ENCODE measurements at regions of chr2 and their contacts with region 1.

Region 1: GRCh38 chr2:31333527-31334183 is 80.9 kb downstream of the XDH start:
- DNase-seq: peak; percentile 74 to 80
- ATAC-seq: peak; percentile 85 to 92
- H3K4me3 ChIP-seq: no peak overlapping the region
- H3K27ac ChIP-seq: peak overlapping the region in 1 of 2 experiments; percentile 5; a peak in 1 of 6 replicates
- H3K4me1 ChIP-seq: no peaks in the 10 kb centered on the region
- CTCF ChIP-seq: peak; percentile 97
- EP300 ChIP-seq: no peak
- POLR2A ChIP-seq: no peak
- RAD21 ChIP-seq: peak; percentile 97 to 98

Region 2: GRCh38 chr2:31170071-31170698 is 163.5 kb before region 1 on chr2:
- CTCF ChIA-PET with region 1: interaction called, 40 read pairs
- POLR2A ChIA-PET with region 1: no interaction called
- DNase-seq: peak; percentile 78 to 84
- ATAC-seq: peak; percentile 92 to 98
- H3K4me3 ChIP-seq: no peak overlapping the region
- H3K27ac ChIP-seq: no peak overlapping the region
- H3K4me1 ChIP-seq: no peaks in the 10 kb centered on the region
- CTCF ChIP-seq: peak; percentile 97
- EP300 ChIP-seq: no peak
- POLR2A ChIP-seq: no peak
- RAD21 ChIP-seq: peak; percentile 96 to 98

Region 3: DNA sequence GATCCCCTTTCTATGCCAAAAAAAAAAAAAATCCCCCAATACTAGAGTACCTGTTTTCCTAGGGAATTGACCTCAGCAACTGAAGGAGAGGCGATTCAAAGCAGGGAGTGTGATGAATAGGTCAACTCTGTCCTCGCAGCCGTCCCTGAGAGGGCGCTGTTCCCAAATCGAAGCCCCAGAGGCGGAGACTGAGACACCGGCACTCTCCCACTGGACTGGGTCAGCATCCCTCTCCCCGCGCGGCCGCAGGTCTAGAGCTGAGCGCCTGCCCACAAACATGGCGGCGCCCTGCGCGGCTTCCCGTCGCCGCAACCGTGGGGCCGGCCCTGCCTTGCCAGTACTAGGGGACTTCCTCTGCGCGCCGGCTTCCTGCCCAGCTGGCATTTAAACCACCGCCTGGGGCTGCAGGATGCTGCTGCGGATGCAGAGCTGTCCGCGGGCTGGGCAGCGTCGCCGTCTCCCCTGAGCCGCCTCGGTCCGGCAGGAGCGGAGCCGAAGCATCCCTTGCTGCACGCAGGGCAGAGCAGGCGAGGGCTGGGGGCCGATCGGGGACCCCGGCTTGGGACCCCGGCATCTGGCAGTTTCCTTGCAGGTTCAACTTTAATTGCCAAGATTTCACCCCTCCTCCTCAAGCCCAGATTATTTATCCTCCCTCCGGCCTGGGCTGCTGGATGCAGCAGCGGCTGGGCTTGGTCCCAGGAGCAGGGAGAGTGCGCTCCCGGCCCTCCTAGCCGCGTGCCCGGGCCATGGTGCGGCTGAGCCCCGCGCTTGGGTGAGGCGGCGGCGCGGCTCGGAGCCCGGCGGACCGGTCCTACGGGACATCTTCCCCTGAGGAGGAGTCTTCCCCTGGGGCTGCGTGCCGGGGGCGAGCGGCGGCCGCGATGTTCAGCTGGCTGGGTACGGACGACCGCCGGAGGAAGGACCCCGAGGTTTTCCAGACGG is 99.6 kb before region 1 on chr2 and contains the start of gene EHD3:
- CTCF ChIA-PET with region 1: interaction called, 16 read pairs
- POLR2A ChIA-PET with region 1: no interaction called
- DNase-seq: peak; percentile 92 to 93
- ATAC-seq: peak; percentile 99 to 100
- H3K4me3 ChIP-seq: peak within 1 kb of the TSS; percentile 68
- H3K27ac ChIP-seq: peak within 1 kb of the TSS; percentile 80 to 92
- H3K4me1 ChIP-seq: peaks cover 14% of the 10 kb centered on the region; the same call in 2 of the 3 replicates
- CTCF ChIP-seq: peak; percentile 90
- EP300 ChIP-seq: no peak
- POLR2A ChIP-seq: peak; percentile 88
- RAD21 ChIP-seq: peak; percentile 61 to 66
- polyA plus RNA-seq, gene EHD3: 10.6 and 12.3 TPM in 2 replicates

Region 4: GRCh38 chr2:31318361-31319336 is 15.0 kb before region 1 on chr2:
- CTCF ChIA-PET with region 1: interaction called, 28 read pairs
- POLR2A ChIA-PET with region 1: no interaction called
- DNase-seq: no peak
- ATAC-seq: no peak
- H3K4me3 ChIP-seq: no peak overlapping the region
- H3K27ac ChIP-seq: no peak overlapping the region
- H3K4me1 ChIP-seq: no peaks in the 10 kb centered on the region; the same call in 2 of the 3 replicates
- CTCF ChIP-seq: no peak
- EP300 ChIP-seq: no peak
- POLR2A ChIP-seq: no peak
- RAD21 ChIP-seq: no peak

Region 5: DNA sequence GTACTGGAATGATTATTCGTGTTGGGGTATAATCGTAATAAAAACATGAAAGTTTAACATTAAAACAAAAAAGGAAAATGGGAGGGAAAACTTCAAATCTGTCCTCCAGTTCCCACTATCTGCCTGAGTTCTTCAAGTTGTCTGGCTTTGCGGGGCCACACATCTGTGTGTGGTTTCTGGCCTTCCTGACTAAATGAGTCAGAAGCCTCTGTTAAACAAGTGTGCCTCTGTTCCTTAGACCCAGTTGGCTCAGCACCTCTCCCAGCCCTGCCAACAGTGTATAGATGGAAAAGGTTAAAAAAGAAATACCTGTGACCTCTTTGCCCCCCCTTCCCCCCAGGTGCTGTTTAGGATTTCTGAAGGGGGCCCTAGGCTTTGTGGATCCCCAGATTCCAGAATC is 50.7 kb after region 1 on chr2:
- CTCF ChIA-PET with region 1: interaction called, 30 read pairs
- POLR2A ChIA-PET with region 1: no interaction called
- DNase-seq: peak; percentile 81 to 89
- ATAC-seq: peak; percentile 88
- H3K4me3 ChIP-seq: no peak overlapping the region
- H3K27ac ChIP-seq: peak overlapping the region; percentile 88 to 89
- H3K4me1 ChIP-seq: peaks cover 57% of the 10 kb centered on the region
- CTCF ChIP-seq: no peak
- EP300 ChIP-seq: no peak
- POLR2A ChIP-seq: no peak
- RAD21 ChIP-seq: no peak